ENCODE measurements at regions of chr2 and their contacts with region 1.

Region 1: DNA sequence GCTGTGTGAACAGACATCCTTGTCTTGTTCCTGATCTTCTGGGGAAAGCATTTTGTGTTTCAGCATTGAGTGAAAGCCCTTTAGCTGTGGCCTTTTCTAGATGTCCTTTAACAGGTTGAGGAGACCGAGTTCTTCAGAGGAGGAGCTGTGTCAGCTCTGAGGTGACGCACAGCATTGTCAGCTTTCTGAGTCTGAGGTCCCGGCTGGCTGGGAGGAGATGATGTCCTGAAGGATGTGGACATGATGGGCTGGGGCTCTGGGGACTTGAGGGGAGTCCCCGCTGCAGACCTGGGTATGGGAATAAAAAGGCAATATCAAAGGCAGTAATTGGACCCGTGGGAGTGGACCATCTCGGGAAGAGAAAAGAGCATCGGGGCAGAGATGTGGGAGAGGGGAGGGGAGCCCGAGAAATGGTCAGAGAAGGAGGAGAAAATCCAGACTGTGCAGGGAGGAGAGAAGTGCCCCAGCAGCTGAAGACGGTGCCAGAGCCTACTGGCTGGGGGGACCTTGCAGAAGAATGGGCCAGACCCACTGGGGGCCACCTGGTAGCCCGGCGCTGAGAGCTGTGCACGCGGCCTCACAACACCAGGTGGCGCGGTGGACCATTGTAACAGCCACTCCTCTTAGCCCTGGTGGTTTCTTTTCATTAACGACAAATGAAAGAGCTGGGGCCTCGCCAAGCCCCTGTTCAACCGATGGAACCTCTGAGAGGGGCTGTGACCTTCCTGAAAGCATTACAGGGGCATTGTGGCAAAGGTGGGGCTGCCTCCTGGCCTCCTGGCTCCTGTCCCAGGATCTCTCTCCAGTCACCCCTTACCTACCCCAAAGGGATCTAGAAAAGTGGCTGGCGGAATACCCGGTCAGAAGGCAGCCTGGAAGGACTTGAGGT is 61.6 kb downstream of the ST3GAL5 start:
- DNase-seq: peak; percentile 66 to 84 (median 79)
- H3K4me3 ChIP-seq: peak overlapping the region in 1 of 7 experiments; percentile 32
- H3K27ac ChIP-seq: no peak overlapping the region
- H3K4me1 ChIP-seq: peaks cover 0 to 6% (median 5%) of the 10 kb centered on the region in 4 experiments
- H3K27me3 ChIP-seq: no peaks in the 10 kb centered on the region

Region 2: DNA sequence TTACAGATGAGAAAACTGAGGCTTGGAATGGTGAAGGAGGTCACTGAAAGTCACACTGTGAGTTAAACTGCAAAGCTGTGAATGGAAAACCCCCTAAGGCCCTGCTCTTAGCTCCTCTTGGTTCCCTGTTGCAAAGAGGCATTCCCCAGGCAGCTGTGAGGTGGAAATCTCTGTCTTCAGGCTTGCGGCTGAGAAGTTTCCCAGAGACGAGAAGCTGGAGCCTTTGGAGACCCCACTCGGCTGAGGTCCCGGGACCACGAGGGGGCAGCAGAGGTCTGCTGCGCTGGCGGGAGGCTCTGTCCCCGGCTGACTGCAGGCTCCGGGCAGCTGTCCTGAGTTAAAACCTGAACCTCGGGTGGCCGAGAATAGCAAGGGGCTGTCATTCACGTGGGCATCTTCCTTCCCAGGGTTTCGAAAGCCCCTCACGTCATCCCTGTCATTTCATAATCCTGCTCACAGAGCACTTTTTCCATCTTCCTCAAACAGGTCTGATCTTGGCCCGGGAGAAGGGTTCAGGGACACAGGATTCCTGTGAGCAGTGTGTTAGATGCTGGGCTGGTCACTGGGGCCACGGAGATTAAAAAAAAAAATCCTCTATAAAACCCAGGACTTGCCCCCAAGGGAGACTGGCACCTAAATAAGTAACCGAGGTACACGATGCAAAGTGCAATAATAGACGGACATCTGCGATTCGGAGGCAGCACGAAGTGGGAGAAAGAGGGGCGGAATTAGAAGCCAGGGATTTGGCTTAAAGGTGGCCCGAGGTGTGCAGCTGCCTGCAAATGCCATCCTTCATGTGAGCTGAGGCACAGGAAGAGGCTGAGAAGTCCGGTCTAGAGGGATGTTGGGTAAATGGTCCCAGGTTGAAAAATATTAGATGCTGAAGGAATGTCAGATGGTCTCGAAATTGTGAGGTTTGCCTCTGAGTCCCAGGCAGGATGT is 98.1 kb before region 1 on chr2:
- CTCF ChIA-PET with region 1: interaction called, 10 read pairs
- POLR2A ChIA-PET with region 1: no interaction called
- DNase-seq: peak; percentile 59 to 77 (median 73)
- H3K4me3 ChIP-seq: no peak overlapping the region
- H3K27ac ChIP-seq: no peak overlapping the region
- H3K4me1 ChIP-seq: peaks cover 0 to 10% (median 4%) of the 10 kb centered on the region in 4 experiments
- H3K27me3 ChIP-seq: peaks cover 0 to 5% (median 2%) of the 10 kb centered on the region in 5 experiments

Region 3: GRCh38 chr2:85858841-85859240 is 31.6 kb after region 1 on chr2:
- CTCF ChIA-PET with region 1: interaction called, 10 read pairs
- POLR2A ChIA-PET with region 1: no interaction called
- DNase-seq: no peak
- H3K4me3 ChIP-seq: no peak overlapping the region
- H3K27ac ChIP-seq: no peak overlapping the region
- H3K4me1 ChIP-seq: peaks cover 10 to 17% (median 16%) of the 10 kb centered on the region in 4 experiments
- H3K27me3 ChIP-seq: no peaks in the 10 kb centered on the region

Region 4: GRCh38 chr2:86035883-86036668 is 208.8 kb after region 1 on chr2:
- CTCF ChIA-PET with region 1: interaction called, 36 read pairs
- POLR2A ChIA-PET with region 1: interaction called, 3 read pairs
- DNase-seq: peak; percentile 70 to 90 (median 84)
- H3K4me3 ChIP-seq: peak overlapping the region in 4 of 7 experiments; percentile 25 to 50 (median 34)
- H3K27ac ChIP-seq: peak overlapping the region; percentile 40 to 82
- H3K4me1 ChIP-seq: peaks cover 17 to 62% (median 52%) of the 10 kb centered on the region in 4 experiments
- H3K27me3 ChIP-seq: no peaks in the 10 kb centered on the region

Region 5: GRCh38 chr2:86079981-86080911 is 253.0 kb after region 1 on chr2:
- CTCF ChIA-PET with region 1: interaction called, 265 read pairs
- POLR2A ChIA-PET with region 1: no interaction called
- DNase-seq: peak; percentile 72 to 84 (median 83)
- H3K4me3 ChIP-seq: no peak overlapping the region
- H3K27ac ChIP-seq: no peak overlapping the region
- H3K4me1 ChIP-seq: peaks cover 0 to 14% (median 6%) of the 10 kb centered on the region in 4 experiments
- H3K27me3 ChIP-seq: no peaks in the 10 kb centered on the region